Breast epithelium (tissue), 4 donors: ENCODE measurements at regions of chr17 and their contacts with region 1.

Region 1: GRCh38 chr17:30236766-30237165 is 1.3 kb upstream of the SLC6A4 start:
- DNase-seq: no peak
- H3K4me3 ChIP-seq: peak overlapping the region in 1 of 3 donors; percentile 27
- H3K27ac ChIP-seq: no peak overlapping the region
- H3K4me1 ChIP-seq: peaks cover 0 to 6% of the 10 kb centered on the region in 2 donors
- H3K27me3 ChIP-seq: peaks cover 10 to 39% of the 10 kb centered on the region in 2 donors
- CTCF ChIP-seq: no peak
- POLR2A ChIP-seq: no peak

Region 2: GRCh38 chr17:29054835-29055234 is 1181.9 kb before region 1 on chr17:
- intact Hi-C with region 1: loop called (anchors 5 kb)
- DNase-seq: no peak
- H3K4me3 ChIP-seq: no peak overlapping the region
- H3K27ac ChIP-seq: no peak overlapping the region
- H3K4me1 ChIP-seq: no peaks in the 10 kb centered on the region
- H3K27me3 ChIP-seq: no peaks in the 10 kb centered on the region
- CTCF ChIP-seq: no peak
- POLR2A ChIP-seq: no peak

Region 3: GRCh38 chr17:30701498-30701989 is 464.8 kb after region 1 on chr17:
- intact Hi-C with region 1: no loop called
- DNase-seq: no peak
- H3K4me3 ChIP-seq: no peak overlapping the region
- H3K27ac ChIP-seq: no peak overlapping the region
- H3K4me1 ChIP-seq: no peaks in the 10 kb centered on the region
- H3K27me3 ChIP-seq: no peaks in the 10 kb centered on the region
- CTCF ChIP-seq: no peak
- POLR2A ChIP-seq: no peak

Region 4: DNA sequence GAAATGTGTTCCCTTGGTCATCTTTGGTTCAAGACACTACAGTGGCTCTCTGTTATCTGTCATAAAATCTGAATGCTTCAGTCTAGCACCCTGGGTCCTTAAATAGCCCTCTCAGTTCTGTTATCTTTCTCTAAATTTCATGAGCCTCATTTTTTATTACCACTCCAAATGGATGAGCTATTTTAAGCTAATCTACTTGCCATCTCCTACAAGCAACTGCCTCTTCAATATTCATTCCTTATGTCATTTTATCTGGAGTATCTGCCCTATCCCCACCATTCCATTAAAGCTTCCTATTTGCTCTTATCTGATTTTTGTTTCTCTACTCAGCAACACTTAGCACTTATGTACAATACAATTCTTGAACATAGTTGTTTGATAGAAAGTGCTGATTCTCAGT is 1112.7 kb after region 1 on chr17:
- intact Hi-C with region 1: no loop called
- DNase-seq: no peak
- H3K4me3 ChIP-seq: no peak overlapping the region
- H3K27ac ChIP-seq: no peak overlapping the region
- H3K4me1 ChIP-seq: no peaks in the 10 kb centered on the region
- H3K27me3 ChIP-seq: no peaks in the 10 kb centered on the region
- CTCF ChIP-seq: no peak
- POLR2A ChIP-seq: no peak